ENCODE measurements at regions of chr17 and their contacts with region 1.

Region 1: DNA sequence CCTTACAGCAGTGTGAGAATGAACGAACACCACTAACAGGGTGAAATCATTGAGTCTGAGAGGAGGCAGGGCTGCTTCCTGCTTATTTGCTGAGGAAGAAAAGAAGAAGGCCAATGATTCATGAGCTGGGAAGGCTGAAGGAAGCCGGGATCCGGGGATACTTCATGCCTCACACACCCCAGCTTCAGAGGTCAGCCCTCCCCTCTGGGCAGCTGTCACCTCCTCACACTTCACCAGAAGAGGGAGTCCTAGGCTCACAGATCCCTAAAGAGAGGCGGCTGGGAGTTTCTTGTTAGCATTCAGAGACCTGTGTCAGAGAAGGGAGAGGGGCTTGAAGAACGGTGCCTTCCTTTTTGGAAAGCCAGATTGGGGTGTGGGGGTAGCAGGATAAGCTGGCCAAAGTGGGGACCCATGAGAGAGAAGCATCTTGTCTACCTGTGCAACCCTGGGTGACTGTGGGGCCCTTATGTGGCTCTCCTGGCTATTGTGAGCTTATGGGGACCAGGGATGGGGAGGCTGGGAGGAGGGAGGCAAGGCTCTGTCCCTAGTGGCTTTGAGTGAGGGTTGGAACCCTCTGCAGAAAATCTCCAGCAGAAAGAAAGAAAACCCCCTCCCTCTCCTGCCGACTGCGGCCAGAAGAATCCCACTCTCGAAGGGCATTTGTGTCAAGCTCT is 94.6 kb downstream of the RGS9 start:
- DNase-seq: peak; percentile 70
- ATAC-seq: peak; percentile 25
- H3K4me3 Mint-ChIP-seq: no peak overlapping the region
- H3K27ac Mint-ChIP-seq: no peak overlapping the region
- H3K4me1 Mint-ChIP-seq: peaks cover 31% of the 10 kb centered on the region
- H3K27me3 Mint-ChIP-seq: peaks cover 10% of the 10 kb centered on the region

Region 2: DNA sequence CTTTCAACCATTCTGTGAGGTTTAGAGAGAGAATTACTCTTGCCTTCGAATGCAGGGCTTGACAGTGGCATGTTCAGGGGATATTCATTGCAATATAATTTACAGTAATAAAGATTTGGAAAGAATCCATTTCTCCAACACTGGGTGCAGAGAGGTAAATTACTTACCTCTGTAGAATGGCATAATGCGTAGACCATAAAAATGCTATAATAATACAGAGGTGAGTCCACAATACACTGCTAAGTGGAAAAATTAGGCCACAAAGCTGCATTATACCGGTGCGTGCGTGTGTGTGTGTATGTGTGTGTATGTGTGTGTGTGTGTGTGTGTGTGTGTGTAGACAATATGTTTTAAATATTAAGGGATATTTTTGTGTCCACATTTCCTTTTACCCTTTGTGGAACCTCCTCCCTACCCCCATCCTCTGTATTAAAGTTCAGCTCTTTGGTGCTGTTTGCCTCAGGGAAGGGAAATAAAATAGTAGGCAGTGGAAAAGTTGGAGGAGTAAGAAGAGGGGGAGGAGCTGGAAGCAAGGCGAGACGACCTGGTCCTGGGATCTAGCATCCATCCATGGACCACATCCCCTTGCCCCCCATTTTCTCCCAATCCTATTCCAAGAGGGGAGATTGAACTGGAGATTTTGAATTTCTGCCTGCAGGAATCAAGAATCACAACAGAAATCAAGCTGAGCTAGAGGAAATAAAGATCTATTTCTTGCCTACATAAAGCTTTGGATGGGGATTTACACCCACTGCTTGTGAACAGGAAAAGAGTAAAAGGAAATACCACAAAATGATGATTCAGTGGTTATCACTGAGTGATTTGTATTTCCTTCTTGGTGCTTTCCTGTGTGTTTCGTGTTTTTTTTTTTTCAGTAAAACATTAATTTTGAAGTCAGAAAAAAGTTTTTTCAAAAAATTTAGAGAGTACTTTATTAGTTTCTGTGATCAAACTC is 30.2 kb after region 1 on chr17:
- CTCF ChIA-PET with region 1: interaction called, 3 read pairs
- POLR2A ChIA-PET with region 1: no interaction called
- intact Hi-C with region 1: loop called in 1 of 2 experiments (anchors 1 kb)
- DNase-seq: no peak
- ATAC-seq: peak; percentile 78
- H3K4me3 Mint-ChIP-seq: no peak overlapping the region
- H3K27ac Mint-ChIP-seq: no peak overlapping the region
- H3K4me1 Mint-ChIP-seq: peaks cover 19% of the 10 kb centered on the region
- H3K27me3 Mint-ChIP-seq: peaks cover 5% of the 10 kb centered on the region

Region 3: GRCh38 chr17:65423347-65424140 is 191.7 kb after region 1 on chr17:
- CTCF ChIA-PET with region 1: no interaction called
- POLR2A ChIA-PET with region 1: no interaction called
- intact Hi-C with region 1: no loop called
- DNase-seq: no peak
- ATAC-seq: no peak
- H3K4me3 Mint-ChIP-seq: no peak overlapping the region
- H3K27ac Mint-ChIP-seq: no peak overlapping the region
- H3K4me1 Mint-ChIP-seq: no peaks in the 10 kb centered on the region
- H3K27me3 Mint-ChIP-seq: peaks cover 3% of the 10 kb centered on the region

Region 4: GRCh38 chr17:65556014-65556909 is 324.5 kb after region 1 on chr17:
- CTCF ChIA-PET with region 1: interaction called, 3 read pairs
- POLR2A ChIA-PET with region 1: no interaction called
- intact Hi-C with region 1: loop called (anchors 1 to 2 kb)
- DNase-seq: peak; percentile 96
- ATAC-seq: peak; percentile 50
- H3K4me3 Mint-ChIP-seq: no peak overlapping the region
- H3K27ac Mint-ChIP-seq: peak overlapping the region; percentile 10
- H3K4me1 Mint-ChIP-seq: peaks cover 27% of the 10 kb centered on the region
- H3K27me3 Mint-ChIP-seq: peaks cover 4% of the 10 kb centered on the region

Region 5: DNA sequence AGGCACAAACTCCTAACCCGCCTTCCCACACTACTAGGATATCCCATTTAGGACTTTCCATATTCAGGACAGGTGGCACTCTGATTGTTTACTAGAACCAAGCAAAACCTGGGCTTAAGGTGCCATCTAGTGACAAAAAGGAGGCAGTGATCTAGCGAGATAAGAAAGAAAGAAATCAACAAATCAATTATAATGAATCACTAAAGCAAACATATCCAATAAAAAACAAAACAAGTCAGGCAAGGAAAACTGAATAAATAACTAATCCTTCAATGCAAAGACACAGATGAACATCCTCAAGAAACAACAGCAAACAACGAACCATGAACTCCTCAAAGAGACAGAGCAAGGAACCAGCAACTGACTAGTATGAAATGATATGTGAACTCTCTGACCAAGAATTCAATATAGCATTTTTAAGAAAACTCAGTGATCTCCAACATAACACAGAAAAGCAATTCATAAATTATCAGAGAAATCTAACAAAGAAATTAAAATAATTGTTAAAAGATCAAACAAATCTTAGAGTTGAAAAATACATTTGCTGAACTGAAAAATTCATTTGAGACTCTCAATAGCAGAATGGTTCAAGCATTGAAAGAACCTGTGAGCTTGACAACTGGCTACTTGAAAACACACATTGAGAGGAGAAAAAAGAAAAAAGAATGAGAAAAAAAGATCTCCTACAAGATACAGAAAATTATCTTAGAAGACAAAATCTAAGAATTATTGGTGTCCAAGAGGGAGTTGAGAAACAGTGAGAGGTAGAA is 756.5 kb after region 1 on chr17:
- CTCF ChIA-PET with region 1: interaction called, 4 read pairs
- POLR2A ChIA-PET with region 1: no interaction called
- intact Hi-C with region 1: loop called (anchors 1 to 5 kb)
- DNase-seq: peak; percentile 13
- ATAC-seq: no peak
- H3K4me3 Mint-ChIP-seq: no peak overlapping the region
- H3K27ac Mint-ChIP-seq: no peak overlapping the region
- H3K4me1 Mint-ChIP-seq: no peaks in the 10 kb centered on the region
- H3K27me3 Mint-ChIP-seq: no peaks in the 10 kb centered on the region

Measured in activated CD4-positive, alpha-beta T cell treated with anti-CD3 and anti-CD28 coated beads for 36 hours (primary cell).